Naive thymus-derived CD4-positive, alpha-beta T cell (primary cell): ENCODE measurements at regions of chr20 and their contacts with region 1.

Region 1: DNA sequence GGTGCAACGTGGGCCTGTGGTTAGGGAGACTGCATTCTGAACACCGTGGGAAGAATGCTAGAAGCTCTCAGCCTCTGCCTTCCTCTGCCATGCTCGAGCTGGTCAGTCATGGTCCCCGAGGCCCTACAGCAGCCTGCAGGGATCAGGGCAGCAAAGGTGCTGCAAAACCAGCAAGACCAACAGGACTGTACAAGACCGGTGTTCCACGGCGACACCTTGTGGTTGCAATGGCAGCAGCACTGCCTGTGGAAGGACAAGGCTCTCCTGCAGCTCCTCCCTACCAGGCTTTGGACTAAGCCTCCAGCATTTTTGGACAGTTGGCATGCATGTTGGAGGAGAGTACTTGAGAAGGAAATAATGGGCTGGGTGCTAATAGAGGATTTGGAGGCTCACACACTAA is 18.8 kb upstream of the MYT1 start:
- DNase-seq: no peak
- ATAC-seq: no peak
- H3K4me3 ChIP-seq: no peak overlapping the region
- H3K4me3 Mint-ChIP-seq: no peak overlapping the region
- H3K27ac ChIP-seq: no peak overlapping the region
- H3K27ac Mint-ChIP-seq: no peak overlapping the region
- H3K4me1 ChIP-seq: no peaks in the 10 kb centered on the region
- H3K4me1 Mint-ChIP-seq: peaks cover 0 to 3% (median 0%) of the 10 kb centered on the region in 7 donors
- H3K27me3 ChIP-seq: no peaks in the 10 kb centered on the region
- H3K27me3 Mint-ChIP-seq: peaks cover 0 to 9% (median 0%) of the 10 kb centered on the region in 5 donors

Region 2: DNA sequence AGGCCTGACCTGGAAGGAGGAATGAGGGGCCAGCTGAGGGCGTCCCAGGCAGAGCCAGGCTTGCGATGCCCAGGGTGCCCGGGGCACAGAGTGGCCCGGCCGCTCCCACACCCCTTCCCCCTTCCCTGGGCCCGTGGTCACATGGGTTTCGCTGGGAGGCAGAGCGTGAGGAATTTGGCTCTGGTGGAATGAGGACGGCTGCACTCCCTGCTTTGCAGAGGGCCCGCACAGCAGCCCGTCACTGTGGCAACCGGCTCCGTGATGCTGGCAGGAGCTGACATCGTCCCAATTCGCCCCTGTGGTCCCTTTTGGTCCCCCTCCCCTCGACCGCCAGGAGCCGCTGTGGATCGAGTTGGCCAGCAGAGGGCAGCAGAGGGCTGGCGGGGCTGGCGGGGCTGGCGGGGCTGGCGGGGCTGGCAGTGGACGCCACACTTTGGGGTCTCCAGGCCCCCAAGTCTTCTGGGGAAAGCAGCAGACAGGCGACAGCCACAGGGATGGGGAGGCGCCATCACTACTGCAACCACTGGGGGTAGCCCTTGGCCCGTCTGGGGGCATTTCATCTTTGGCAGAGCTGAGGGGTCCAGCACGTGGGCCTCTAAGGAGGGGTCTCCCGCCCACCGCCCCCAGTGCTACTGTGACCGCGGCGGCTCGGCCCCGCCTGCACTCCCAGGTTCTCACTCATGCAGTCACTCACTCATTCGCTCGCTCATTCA is 1089.1 kb before region 1 on chr20:
- CTCF ChIA-PET with region 1: no interaction called
- POLR2A ChIA-PET with region 1: no interaction called
- intact Hi-C with region 1: loop called in 1 of 2 experiments (anchors 5 kb)
- DNase-seq: peak in 8 of 9 donors; percentile 16 to 64 (median 37)
- ATAC-seq: peak; percentile 78
- H3K4me3 ChIP-seq: no peak overlapping the region
- H3K4me3 Mint-ChIP-seq: no peak overlapping the region
- H3K27ac ChIP-seq: no peak overlapping the region
- H3K27ac Mint-ChIP-seq: no peak overlapping the region
- H3K4me1 ChIP-seq: no peaks in the 10 kb centered on the region
- H3K4me1 Mint-ChIP-seq: peaks cover 0 to 3% (median 0%) of the 10 kb centered on the region in 7 donors
- H3K27me3 ChIP-seq: peaks cover 0 to 3% of the 10 kb centered on the region in 2 donors
- H3K27me3 Mint-ChIP-seq: peaks cover 0 to 18% (median 11%) of the 10 kb centered on the region in 5 donors